Activated CD4-positive, alpha-beta memory T cell treated with anti-CD3 and anti-CD28 coated beads for 36 hours (primary cell): ENCODE measurements at regions of chr10 and their contacts with region 1.

Region 1: GRCh38 chr10:11113156-11113555 is 95.5 kb downstream of the CELF2 start:
- DNase-seq: peak; percentile 19
- H3K4me3 Mint-ChIP-seq: no peak overlapping the region
- H3K27ac Mint-ChIP-seq: peak overlapping the region; percentile 10
- H3K4me1 Mint-ChIP-seq: peaks cover 20% of the 10 kb centered on the region
- H3K27me3 Mint-ChIP-seq: no peaks in the 10 kb centered on the region

Region 2: DNA sequence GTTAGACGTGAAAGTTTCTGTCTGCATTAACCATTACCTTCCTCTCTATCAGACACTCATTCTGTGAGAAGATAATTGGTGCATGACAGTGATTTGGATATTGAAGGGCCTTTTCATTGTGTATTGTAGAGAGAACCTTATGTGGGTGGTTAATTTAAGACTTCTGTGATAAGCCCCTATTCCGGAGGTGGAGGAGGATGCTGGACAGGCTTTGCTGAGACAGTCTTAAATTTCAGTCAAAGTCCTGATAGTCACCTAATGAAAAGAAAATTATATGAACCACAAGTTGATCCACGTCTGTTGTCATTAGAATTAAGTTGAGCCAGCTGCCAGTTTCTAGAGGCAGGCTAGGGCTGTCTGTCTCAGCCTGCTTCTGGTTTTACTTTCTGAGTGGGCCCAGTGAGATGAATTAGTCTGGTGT is 32.6 kb before region 1 on chr10:
- CTCF ChIA-PET with region 1: no interaction called
- POLR2A ChIA-PET with region 1: no interaction called
- intact Hi-C with region 1: no loop called
- DNase-seq: no peak
- H3K4me3 Mint-ChIP-seq: no peak overlapping the region
- H3K27ac Mint-ChIP-seq: no peak overlapping the region
- H3K4me1 Mint-ChIP-seq: no peaks in the 10 kb centered on the region
- H3K27me3 Mint-ChIP-seq: peaks cover 1% of the 10 kb centered on the region

Region 3: DNA sequence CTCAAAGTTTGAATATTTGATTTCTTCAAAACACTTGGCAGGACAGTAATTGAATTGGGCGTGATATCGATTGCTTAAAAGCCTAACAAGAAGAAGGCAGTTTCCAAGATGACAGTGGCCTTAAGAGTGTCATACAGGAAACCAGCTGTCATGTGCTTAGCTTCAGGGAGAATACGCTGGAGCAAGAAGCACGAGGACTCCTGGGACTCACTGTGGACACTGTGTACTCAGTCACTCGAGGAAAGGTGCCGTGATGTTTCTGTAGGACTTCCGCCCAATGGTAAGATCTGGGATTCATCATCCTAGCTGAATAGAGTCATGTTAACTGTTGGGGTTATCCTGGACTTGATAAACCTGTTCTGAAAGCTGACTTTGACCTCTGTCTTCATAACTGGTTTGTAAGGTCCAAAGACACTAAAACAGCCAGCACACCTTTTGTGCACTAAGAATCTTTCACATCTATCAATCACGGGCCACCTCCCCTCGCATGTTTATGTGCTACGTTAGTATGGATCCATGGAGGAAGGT is 18.0 kb after region 1 on chr10:
- CTCF ChIA-PET with region 1: no interaction called
- POLR2A ChIA-PET with region 1: no interaction called
- intact Hi-C with region 1: no loop called
- DNase-seq: no peak
- H3K4me3 Mint-ChIP-seq: no peak overlapping the region
- H3K27ac Mint-ChIP-seq: no peak overlapping the region
- H3K4me1 Mint-ChIP-seq: no peaks in the 10 kb centered on the region
- H3K27me3 Mint-ChIP-seq: no peaks in the 10 kb centered on the region

Region 4: GRCh38 chr10:11145495-11145855 is 32.3 kb after region 1 on chr10:
- CTCF ChIA-PET with region 1: interaction called, 15 read pairs
- POLR2A ChIA-PET with region 1: interaction called, 3 read pairs
- intact Hi-C with region 1: loop called (anchors 1 kb)
- DNase-seq: peak; percentile 78
- H3K4me3 Mint-ChIP-seq: peak overlapping the region; percentile 64
- H3K27ac Mint-ChIP-seq: peak overlapping the region; percentile 93
- H3K4me1 Mint-ChIP-seq: peaks cover 86% of the 10 kb centered on the region
- H3K27me3 Mint-ChIP-seq: no peaks in the 10 kb centered on the region

Region 5: GRCh38 chr10:11595395-11595692 is 482.2 kb after region 1 on chr10:
- CTCF ChIA-PET with region 1: no interaction called
- POLR2A ChIA-PET with region 1: no interaction called
- intact Hi-C with region 1: no loop called
- DNase-seq: no peak
- H3K4me3 Mint-ChIP-seq: no peak overlapping the region
- H3K27ac Mint-ChIP-seq: no peak overlapping the region
- H3K4me1 Mint-ChIP-seq: peaks cover 12% of the 10 kb centered on the region
- H3K27me3 Mint-ChIP-seq: peaks cover 1% of the 10 kb centered on the region